Breast epithelium (tissue), 4 donors: ENCODE measurements at regions of chr1 and their contacts with region 1.

Region 1: GRCh38 chr1:231757755-231758154 is 131.2 kb downstream of the DISC1 start:
- DNase-seq: no peak
- H3K4me3 ChIP-seq: no peak overlapping the region
- H3K27ac ChIP-seq: no peak overlapping the region
- H3K4me1 ChIP-seq: no peaks in the 10 kb centered on the region
- H3K27me3 ChIP-seq: no peaks in the 10 kb centered on the region
- CTCF ChIP-seq: no peak
- POLR2A ChIP-seq: no peak

Region 2: GRCh38 chr1:230077436-230078221 is 1680.1 kb before region 1 on chr1:
- intact Hi-C with region 1: no loop called
- DNase-seq: no peak
- H3K4me3 ChIP-seq: no peak overlapping the region
- H3K27ac ChIP-seq: no peak overlapping the region
- H3K4me1 ChIP-seq: no peaks in the 10 kb centered on the region
- H3K27me3 ChIP-seq: no peaks in the 10 kb centered on the region
- CTCF ChIP-seq: no peak
- POLR2A ChIP-seq: no peak

Region 3: GRCh38 chr1:231571904-231572303 is 185.9 kb before region 1 on chr1:
- intact Hi-C with region 1: no loop called
- DNase-seq: no peak
- H3K4me3 ChIP-seq: no peak overlapping the region
- H3K27ac ChIP-seq: peak overlapping the region; percentile 2 to 30
- H3K4me1 ChIP-seq: no peaks in the 10 kb centered on the region
- H3K27me3 ChIP-seq: no peaks in the 10 kb centered on the region
- CTCF ChIP-seq: no peak
- POLR2A ChIP-seq: no peak

Region 4: GRCh38 chr1:231770506-231771175 is 12.9 kb after region 1 on chr1:
- intact Hi-C with region 1: loop called (anchors 1 kb)
- DNase-seq: no peak
- H3K4me3 ChIP-seq: no peak overlapping the region
- H3K27ac ChIP-seq: no peak overlapping the region
- H3K4me1 ChIP-seq: no peaks in the 10 kb centered on the region
- H3K27me3 ChIP-seq: no peaks in the 10 kb centered on the region
- CTCF ChIP-seq: no peak
- POLR2A ChIP-seq: no peak